CD8-positive, alpha-beta T cell (primary cell): ENCODE measurements at regions of chr20 and their contacts with region 1.

Region 1: GRCh38 chr20:44683263-44684046 is 31.7 kb upstream of the CCN5 start:
- DNase-seq: peak in 8 of 9 experiments; percentile 10 to 76 (median 59)
- ATAC-seq: peak; percentile 81
- H3K4me3 ChIP-seq: no peak overlapping the region
- H3K4me3 Mint-ChIP-seq: no peak overlapping the region
- H3K27ac ChIP-seq: no peak overlapping the region
- H3K27ac Mint-ChIP-seq: no peak overlapping the region
- H3K4me1 ChIP-seq: peaks cover 4% of the 10 kb centered on the region
- H3K4me1 Mint-ChIP-seq: peaks cover 9% of the 10 kb centered on the region
- H3K27me3 ChIP-seq: no peaks in the 10 kb centered on the region
- H3K27me3 Mint-ChIP-seq: peaks cover 9% of the 10 kb centered on the region
- CTCF ChIP-seq: peak; percentile 54

Region 2: DNA sequence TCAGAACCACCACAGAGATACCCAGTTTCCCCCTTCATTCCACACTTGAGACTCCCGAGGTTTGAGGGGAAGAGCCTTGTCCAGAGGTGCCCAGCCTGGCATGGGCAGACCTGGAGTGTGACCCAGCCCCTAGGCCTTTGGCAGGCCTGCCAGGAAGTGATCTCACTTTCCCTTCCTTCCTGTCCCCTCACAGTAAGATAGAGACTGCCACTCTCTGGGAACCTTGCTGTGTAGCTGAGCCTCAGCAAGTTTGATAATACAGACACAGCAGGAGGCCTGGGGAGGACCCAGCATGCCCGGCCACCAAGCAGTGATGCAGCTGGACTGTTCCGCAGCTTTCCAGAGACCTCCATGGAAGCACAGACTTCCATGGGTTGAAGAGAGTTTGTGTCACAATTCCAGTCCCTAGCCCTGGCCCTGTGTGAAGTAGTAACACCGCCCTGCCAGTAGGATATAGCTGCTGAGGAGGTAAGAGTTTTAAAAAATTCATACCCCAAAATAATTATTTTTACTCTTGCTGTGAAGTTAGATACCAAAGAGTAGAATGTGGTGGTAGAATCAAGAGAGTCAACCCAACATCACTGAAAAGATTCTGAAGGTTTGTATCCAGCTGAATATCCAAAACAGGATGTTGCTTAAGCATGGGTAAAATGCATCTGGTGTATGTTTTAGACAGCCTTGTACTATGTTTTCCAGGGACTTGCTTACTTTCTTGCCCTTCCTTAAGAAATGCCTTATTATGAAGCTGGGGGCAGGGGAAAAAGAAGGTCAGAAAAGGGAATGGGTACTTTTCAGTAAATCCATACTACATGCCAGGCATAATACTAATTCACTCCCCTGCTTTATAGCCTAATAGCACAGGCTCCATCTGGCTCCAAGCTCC is 84.8 kb before region 1 on chr20:
- CTCF ChIA-PET with region 1: interaction called, 17 read pairs
- POLR2A ChIA-PET with region 1: no interaction called
- intact Hi-C with region 1: no loop called
- DNase-seq: peak in 1 of 9 experiments; percentile 41
- ATAC-seq: peak; percentile 38
- H3K4me3 ChIP-seq: peak overlapping the region in 1 of 2 experiments; percentile 10
- H3K4me3 Mint-ChIP-seq: peak overlapping the region; percentile 67
- H3K27ac ChIP-seq: peak overlapping the region in 1 of 2 experiments; percentile 38
- H3K27ac Mint-ChIP-seq: peak overlapping the region; percentile 87
- H3K4me1 ChIP-seq: peaks cover 26% of the 10 kb centered on the region
- H3K4me1 Mint-ChIP-seq: peaks cover 39% of the 10 kb centered on the region
- H3K27me3 ChIP-seq: no peaks in the 10 kb centered on the region
- H3K27me3 Mint-ChIP-seq: no peaks in the 10 kb centered on the region
- CTCF ChIP-seq: peak; percentile 13

Region 3: GRCh38 chr20:44642203-44643153 is 41.0 kb before region 1 on chr20:
- CTCF ChIA-PET with region 1: interaction called, 161 read pairs
- POLR2A ChIA-PET with region 1: interaction called, 3 read pairs
- intact Hi-C with region 1: loop called in 1 of 2 experiments (anchors 5 kb)
- DNase-seq: peak in 7 of 9 experiments; percentile 20 to 74 (median 45)
- ATAC-seq: peak; percentile 27
- H3K4me3 ChIP-seq: peak overlapping the region; percentile 14 to 32
- H3K4me3 Mint-ChIP-seq: peak overlapping the region; percentile 51
- H3K27ac ChIP-seq: peak overlapping the region; percentile 51 to 93
- H3K27ac Mint-ChIP-seq: peak overlapping the region; percentile 93
- H3K4me1 ChIP-seq: peaks cover 65% of the 10 kb centered on the region
- H3K4me1 Mint-ChIP-seq: peaks cover 69% of the 10 kb centered on the region
- H3K27me3 ChIP-seq: no peaks in the 10 kb centered on the region
- H3K27me3 Mint-ChIP-seq: no peaks in the 10 kb centered on the region
- CTCF ChIP-seq: peak; percentile 44

Region 4: GRCh38 chr20:44733341-44734069 is 50.0 kb after region 1 on chr20:
- CTCF ChIA-PET with region 1: interaction called, 26 read pairs
- POLR2A ChIA-PET with region 1: no interaction called
- intact Hi-C with region 1: loop called (anchors 1 kb)
- DNase-seq: peak; percentile 29 to 78 (median 56)
- ATAC-seq: peak; percentile 85
- H3K4me3 ChIP-seq: no peak overlapping the region
- H3K4me3 Mint-ChIP-seq: no peak overlapping the region
- H3K27ac ChIP-seq: no peak overlapping the region
- H3K27ac Mint-ChIP-seq: no peak overlapping the region
- H3K4me1 ChIP-seq: peaks cover 7% of the 10 kb centered on the region
- H3K4me1 Mint-ChIP-seq: peaks cover 14% of the 10 kb centered on the region
- H3K27me3 ChIP-seq: no peaks in the 10 kb centered on the region
- H3K27me3 Mint-ChIP-seq: no peaks in the 10 kb centered on the region
- CTCF ChIP-seq: peak; percentile 71

Region 5: DNA sequence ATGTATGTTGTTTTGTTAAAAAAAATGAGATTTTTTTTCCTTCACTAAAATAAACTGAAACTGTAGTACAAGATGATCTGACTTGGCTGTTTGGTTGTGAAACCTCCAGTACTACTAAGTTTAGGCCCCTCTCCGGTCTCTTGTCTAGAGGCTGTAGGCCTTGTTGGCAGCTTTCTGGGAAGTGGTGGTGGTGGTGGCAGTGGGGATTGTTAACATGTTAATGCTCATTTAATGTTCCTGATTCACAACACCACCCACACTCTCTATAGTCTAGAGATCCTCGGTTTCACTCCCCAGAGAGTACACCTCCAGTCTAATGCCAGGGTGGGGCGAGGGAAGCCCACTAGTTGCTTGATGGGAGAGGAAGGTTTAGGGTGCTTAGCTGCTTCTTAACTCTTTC is 307.0 kb after region 1 on chr20:
- CTCF ChIA-PET with region 1: no interaction called
- POLR2A ChIA-PET with region 1: no interaction called
- intact Hi-C with region 1: no loop called
- DNase-seq: peak in 3 of 9 experiments; percentile 22 to 55 (median 26)
- ATAC-seq: peak; percentile 54
- H3K4me3 ChIP-seq: peak overlapping the region; percentile 23 to 24
- H3K4me3 Mint-ChIP-seq: peak overlapping the region; percentile 82
- H3K27ac ChIP-seq: peak overlapping the region; percentile 11 to 69
- H3K27ac Mint-ChIP-seq: peak overlapping the region; percentile 95
- H3K4me1 ChIP-seq: peaks cover 57% of the 10 kb centered on the region
- H3K4me1 Mint-ChIP-seq: peaks cover 84% of the 10 kb centered on the region
- H3K27me3 ChIP-seq: no peaks in the 10 kb centered on the region
- H3K27me3 Mint-ChIP-seq: no peaks in the 10 kb centered on the region
- CTCF ChIP-seq: no peak

Region 6: GRCh38 chr20:45111799-45112471 is 428.5 kb after region 1 on chr20:
- CTCF ChIA-PET with region 1: no interaction called
- POLR2A ChIA-PET with region 1: no interaction called
- intact Hi-C with region 1: loop called in 1 of 2 experiments (anchors 5 kb)
- DNase-seq: peak in 1 of 9 experiments; percentile 27
- ATAC-seq: no peak
- H3K4me3 ChIP-seq: no peak overlapping the region
- H3K4me3 Mint-ChIP-seq: no peak overlapping the region
- H3K27ac ChIP-seq: no peak overlapping the region
- H3K27ac Mint-ChIP-seq: no peak overlapping the region
- H3K4me1 ChIP-seq: no peaks in the 10 kb centered on the region
- H3K4me1 Mint-ChIP-seq: peaks cover 8% of the 10 kb centered on the region
- H3K27me3 ChIP-seq: no peaks in the 10 kb centered on the region
- H3K27me3 Mint-ChIP-seq: peaks cover 11% of the 10 kb centered on the region
- CTCF ChIP-seq: no peak